Gastrocnemius medialis (tissue), 4 donors: ENCODE measurements at regions of chr22 and their contacts with region 1.

Region 1: GRCh38 chr22:37561212-37562048 is 1.1 kb downstream of the CDC42EP1 start:
- DNase-seq: peak; percentile 55 to 73
- ATAC-seq: peak; percentile 55 to 65
- H3K4me3 ChIP-seq: peak overlapping the region; percentile 63 to 68 (median 66)
- H3K27ac ChIP-seq: peak overlapping the region; percentile 83 to 91 (median 86)
- H3K4me1 ChIP-seq: peaks cover 19% of the 10 kb centered on the region in 2 donors
- H3K27me3 ChIP-seq: peaks cover 17 to 35% (median 29%) of the 10 kb centered on the region in 3 donors
- CTCF ChIP-seq: peak; percentile 34 to 72 (median 67)
- POLR2A ChIP-seq: peak; percentile 17 to 36

Region 2: DNA sequence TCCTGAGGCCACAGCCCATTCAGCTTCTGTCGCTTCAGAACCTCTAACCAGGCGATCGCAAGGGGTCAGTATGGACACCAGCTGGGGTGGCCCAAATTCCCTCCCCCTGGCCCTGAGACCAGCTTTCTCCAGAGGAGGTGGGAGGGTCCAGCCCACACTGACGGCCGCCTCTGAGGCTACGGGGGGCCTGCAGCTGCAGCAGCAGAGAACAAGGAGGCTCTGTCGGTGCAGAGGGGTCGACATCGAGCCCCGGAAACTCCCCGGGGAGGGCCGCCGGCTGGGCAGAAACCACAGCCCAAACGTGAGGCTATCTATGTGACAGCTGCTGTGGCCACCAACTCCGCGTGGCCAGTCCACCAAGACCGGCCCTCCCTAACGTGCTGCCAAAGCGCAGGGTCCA is 175.0 kb before region 1 on chr22:
- in situ Hi-C with region 1: no loop called
- intact Hi-C with region 1: no loop called
- DNase-seq: no peak
- ATAC-seq: no peak
- H3K4me3 ChIP-seq: no peak overlapping the region
- H3K27ac ChIP-seq: no peak overlapping the region
- H3K4me1 ChIP-seq: no peaks in the 10 kb centered on the region
- H3K27me3 ChIP-seq: peaks cover 3 to 16% (median 15%) of the 10 kb centered on the region in 3 donors
- CTCF ChIP-seq: no peak
- POLR2A ChIP-seq: no peak

Region 3: DNA sequence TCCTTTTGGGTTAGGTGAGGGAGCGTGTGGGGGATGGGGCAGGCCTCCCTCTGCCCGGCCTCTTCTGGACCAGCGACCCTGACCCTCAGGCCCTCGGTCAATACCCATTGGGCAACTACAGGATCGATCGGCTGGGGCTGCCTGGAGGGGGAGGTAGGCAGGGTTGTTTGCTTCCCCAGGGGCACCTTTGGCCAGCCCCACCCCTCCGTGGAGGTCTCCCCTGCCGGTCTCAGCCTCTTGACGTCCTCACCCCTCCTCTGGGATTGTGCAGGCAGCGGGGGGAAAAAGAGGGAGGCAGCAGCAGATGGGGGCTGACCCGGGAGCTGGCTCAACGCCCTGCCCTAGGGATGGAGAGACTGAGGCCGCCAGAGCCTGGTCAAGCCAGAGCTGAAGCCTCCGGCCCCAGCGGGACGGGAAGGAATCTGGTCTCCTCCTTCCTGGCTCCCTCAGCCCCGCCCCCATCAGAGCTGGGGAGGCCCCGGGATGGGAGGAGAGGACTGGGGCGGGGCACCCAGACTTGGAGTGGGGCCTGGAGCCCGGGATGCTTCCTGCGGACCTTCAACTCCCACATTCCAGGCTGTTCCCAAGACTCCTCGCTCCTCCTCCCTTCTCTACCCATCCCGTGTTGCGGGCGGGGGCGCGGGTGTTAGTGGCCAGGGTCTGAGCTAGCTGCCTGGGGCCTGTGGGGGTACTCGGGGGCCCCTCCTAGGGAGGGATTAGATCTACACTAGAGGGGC is 15.6 kb before region 1 on chr22:
- in situ Hi-C with region 1: no loop called
- intact Hi-C with region 1: loop called (anchors 2 kb)
- DNase-seq: peak; percentile 64 to 80
- ATAC-seq: peak; percentile 66 to 76
- H3K4me3 ChIP-seq: peak overlapping the region in 2 of 4 donors; percentile 30 to 32
- H3K27ac ChIP-seq: peak overlapping the region; percentile 82 to 86 (median 84)
- H3K4me1 ChIP-seq: peaks cover 13 to 19% of the 10 kb centered on the region in 2 donors
- H3K27me3 ChIP-seq: peaks cover 0 to 8% (median 0%) of the 10 kb centered on the region in 3 donors
- CTCF ChIP-seq: no peak
- POLR2A ChIP-seq: peak; percentile 15 to 29